Posterior cingulate gyrus (tissue), 11 donors: ENCODE measurements at regions of chr14 and their contacts with region 1.

Region 1: DNA sequence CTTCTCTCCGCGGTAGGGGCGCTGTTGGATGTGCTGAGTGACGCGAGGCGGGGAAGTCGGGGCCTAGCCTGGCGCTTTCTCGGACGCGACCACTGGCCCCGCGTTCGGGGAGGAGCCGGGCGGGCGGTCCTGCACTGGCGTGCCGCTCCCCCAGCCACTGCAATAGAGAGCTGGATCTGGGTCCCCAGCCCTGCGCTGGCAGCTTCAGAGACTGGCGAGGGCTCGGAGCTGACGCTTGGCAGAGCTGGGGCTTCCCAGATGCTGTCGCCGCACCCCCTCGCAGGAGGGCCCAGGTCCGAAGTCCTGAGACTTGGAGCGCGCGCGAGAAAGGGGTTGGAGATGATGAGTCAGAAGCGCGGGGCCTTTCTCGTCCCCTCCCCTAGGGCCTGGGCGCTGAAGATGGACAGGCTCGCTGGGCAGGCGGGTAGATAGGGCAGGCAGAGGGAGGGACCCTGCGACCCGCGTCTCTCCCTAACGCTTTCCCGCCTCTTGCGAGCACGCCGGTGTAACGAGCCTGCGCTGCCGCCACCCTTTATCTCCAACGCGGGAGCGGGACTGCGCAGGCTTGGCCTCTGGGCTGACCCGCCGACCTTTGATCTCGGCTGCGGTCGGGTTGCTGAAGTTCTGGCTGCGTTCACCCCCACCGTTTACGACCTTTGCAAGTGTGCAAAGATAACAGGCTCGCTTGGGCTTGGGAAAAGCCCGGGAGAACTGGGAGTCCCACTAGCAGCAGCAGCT is 3.0 kb downstream of the TMEM253 start:
- DNase-seq: peak; percentile 95 to 99 (median 97)

Region 2: GRCh38 chr14:20682435-20683124 is 421.3 kb before region 1 on chr14:
- intact Hi-C with region 1: loop called (anchors 5 kb)
- DNase-seq: peak; percentile 84 to 98 (median 89)

Region 3: DNA sequence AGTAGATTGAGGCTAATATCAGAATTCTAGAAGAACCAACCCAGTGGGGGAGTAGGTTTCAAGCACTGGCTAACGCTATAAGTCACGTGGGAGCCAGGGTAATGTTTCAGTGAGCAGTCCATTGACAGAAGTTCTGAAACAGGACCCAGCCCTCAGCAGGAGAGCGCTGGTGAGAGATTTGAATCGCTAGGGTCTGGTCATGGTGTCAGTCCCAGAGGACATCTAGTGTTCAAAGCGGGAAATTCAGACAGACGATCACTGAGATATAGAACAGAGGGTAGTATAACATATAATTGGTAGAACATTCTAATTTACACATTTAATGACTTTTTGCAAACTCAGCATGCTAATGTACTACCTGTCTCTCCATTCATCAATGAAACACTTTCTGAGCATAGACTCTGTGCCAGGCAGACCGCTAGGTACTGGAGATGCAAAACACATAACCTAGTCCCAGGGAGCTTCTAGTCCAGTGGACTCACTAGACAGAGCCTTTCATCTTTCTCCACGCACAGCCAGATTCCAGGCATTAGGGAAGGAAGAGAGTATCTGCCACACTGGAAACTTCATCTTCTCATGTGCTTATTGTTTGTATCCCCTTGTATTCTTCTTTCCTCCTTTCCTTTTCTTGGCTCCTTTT is 248.1 kb before region 1 on chr14:
- intact Hi-C with region 1: loop called (anchors 5 kb)
- DNase-seq: peak in 7 of 10 donors; percentile 32 to 91 (median 51)

Region 4: DNA sequence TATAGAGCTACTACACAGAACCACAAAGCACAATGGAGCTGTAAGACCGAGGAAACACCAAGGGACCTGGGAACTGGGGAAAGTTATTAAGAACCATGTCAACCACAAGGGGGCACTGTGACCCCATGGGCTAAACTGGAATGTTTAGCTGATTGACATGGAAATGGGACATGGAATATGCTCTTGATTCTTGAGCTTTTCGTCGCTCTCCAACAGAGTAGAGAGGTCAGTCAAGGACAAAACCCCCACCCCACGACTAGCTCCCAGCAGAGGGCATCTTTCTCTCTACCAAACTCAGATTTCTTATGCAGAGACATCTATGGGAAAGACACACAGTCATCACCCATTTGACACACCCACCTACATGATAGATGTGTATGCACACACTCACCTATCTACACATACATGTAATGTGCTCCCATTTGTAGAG is 89.1 kb before region 1 on chr14:
- intact Hi-C with region 1: loop called (anchors 1 kb)
- DNase-seq: peak in 9 of 10 donors; percentile 57 to 97 (median 91)

Region 5: DNA sequence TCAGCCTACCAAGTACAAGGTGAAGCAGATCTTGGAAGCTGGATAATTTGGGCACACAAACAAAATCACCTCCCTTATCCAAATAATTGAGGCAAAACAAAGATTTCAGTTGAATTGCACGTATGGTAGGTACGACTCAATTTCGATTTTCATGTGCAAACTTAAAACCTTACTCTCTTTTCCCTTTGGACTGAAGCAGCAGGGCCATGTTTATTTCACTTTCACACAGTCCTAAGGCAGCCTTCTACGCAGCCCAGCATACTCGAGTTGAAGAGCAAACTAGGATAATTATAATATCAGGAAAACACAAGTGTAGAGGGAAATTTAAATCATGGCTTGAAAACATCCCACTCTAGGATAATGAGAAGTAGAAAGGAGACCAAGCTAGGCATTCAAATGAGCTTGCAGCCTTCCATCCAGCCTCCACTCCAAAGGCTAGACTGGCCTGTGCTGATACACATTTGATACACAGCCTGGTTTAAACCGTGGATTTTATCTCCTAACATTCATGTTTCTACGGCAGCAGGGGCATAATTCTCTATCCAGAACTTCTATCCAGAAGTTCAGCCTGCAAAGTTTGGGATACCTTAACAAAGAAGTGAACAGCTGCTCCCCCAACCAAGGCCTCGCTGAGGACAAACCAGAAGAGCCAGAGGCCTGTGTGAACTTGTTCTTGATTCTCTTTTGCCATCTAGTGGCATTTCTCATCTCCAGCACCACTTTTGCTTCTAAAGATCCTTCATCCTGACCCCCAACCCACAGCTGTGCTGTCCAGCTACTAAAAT is 64.1 kb before region 1 on chr14:
- intact Hi-C with region 1: loop called (anchors 1 kb)
- DNase-seq: peak in 3 of 10 donors; percentile 28 to 86 (median 65)

Region 6: DNA sequence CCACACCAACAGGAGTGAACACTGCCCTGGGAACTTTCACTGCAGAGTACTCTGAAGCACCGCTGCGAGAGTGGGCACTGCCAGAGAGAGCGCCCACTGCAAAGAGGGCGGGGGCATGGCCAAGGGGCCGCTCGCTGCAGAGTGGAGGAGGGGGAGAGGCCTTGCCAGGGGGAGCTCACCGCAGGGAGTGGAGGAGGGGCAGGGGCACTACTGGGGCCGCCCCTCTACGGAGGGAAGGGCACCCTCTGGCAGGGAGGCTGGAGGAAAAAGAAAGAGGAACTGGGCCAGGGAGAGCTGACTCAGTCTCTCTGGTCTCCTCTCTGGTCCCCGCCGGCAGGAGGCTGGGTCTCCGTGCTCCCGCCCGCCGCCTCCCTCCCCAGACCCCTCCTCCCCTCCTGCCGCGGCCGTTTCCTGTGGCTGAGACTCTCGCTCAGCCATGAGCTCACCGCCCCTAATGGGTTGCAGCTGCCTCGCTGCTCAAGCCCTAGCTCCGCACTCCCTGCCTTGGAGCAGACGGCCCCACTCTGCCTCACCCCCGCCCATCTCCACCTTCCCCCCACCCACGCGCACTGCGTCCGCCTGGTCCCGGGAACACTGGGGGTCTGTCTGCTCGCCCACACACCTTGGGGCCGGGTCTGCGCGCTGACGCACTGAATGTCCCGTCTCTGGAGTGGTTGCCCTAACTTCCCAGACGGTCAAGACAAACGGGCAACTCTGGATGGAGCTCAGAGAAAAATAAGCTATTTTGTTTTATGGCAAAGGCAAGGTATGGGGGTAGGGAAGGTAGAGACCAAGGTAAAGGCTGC is 32.5 kb before region 1 on chr14:
- intact Hi-C with region 1: loop called (anchors 1 kb)
- DNase-seq: peak in 9 of 10 donors; percentile 52 to 94 (median 61)

Region 7: DNA sequence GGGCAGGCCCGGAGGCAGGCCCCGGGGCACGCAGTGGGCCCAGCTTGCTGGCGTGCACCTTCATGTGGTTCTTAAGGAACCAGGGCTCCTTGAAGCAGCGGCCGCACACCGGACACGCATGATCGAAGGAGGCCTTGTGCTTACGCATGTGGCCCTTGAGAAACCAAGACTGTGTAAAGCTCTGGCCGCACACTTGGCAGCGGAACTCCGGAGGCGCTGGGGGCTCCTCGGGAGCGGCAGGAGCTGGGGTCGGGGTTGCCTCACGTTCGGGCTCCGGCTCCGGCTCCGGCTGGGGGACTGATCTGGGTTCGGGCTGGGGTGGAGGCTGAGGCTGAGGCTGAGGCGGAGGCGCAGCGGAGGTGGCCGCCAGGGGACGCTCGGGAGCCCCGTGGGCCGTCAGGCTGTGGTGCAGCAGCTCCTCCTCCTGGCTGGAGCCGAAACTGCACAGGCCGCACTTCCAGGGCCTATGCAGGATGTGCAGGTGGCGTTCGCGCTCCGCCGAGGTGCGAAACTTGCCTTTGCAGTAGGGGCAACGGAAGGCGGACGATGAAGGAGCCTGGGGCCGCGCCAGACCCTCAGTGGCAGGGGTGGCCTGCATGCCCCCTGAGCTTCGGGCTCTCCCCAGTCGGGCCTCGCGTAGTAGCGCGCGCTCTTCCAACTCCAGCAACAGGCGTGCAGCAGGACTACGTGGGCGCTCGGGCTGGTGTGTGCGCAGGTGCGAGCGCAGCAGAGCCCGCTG is 11.4 kb before region 1 on chr14:
- intact Hi-C with region 1: loop called (anchors 2 kb)
- DNase-seq: peak in 9 of 10 donors; percentile 56 to 96 (median 76)

Region 8: DNA sequence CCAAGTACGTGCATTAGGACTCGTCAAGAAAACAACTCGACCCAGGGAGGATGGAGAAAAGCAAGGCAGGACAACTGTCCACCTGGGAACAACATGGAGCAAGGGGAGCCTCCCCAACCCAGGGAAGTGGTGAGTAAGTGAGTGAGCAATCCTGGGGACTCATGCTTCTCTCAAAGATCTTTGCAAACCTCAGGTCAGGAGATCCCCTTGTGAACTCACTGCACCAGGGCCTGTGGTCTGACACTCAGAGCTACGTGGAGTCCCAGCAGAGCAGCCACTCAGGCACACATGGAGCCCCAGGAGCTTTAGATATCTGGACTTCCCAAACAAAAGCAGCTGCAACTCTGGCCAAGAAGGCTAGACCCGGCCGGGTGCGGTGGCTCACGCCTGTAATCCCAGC is 64.2 kb after region 1 on chr14:
- intact Hi-C with region 1: no loop called
- DNase-seq: no peak

Region 9: GRCh38 chr14:21269252-21270046 is 165.6 kb after region 1 on chr14 and contains the start of gene HNRNPC:
- intact Hi-C with region 1: no loop called
- DNase-seq: peak; percentile 99 to 100 (median 100)

Region 10: GRCh38 chr14:22185191-22185590 is 1081.3 kb after region 1 on chr14:
- intact Hi-C with region 1: no loop called
- DNase-seq: no peak